ENCODE measurements at regions of chr20 and their contacts with region 1.

Region 1: GRCh38 chr20:36645998-36646397 is at the start of gene SLA2:
- DNase-seq: peak; percentile 86
- ATAC-seq: peak; percentile 80
- H3K4me3 Mint-ChIP-seq: peak within 1 kb of the TSS; percentile 99
- H3K27ac Mint-ChIP-seq: peak within 1 kb of the TSS; percentile 93
- H3K4me1 Mint-ChIP-seq: peaks cover 49% of the 10 kb centered on the region
- H3K27me3 Mint-ChIP-seq: no peaks in the 10 kb centered on the region
- total RNA-seq, gene SLA2: 131 to 137 TPM

Region 2: GRCh38 chr20:36573103-36573794 is 72.7 kb before region 1 on chr20 and contains the start of gene TGIF2:
- CTCF ChIA-PET with region 1: interaction called, 6 read pairs
- POLR2A ChIA-PET with region 1: interaction called, 16 read pairs
- DNase-seq: peak; percentile 93
- ATAC-seq: peak; percentile 76
- H3K4me3 Mint-ChIP-seq: peak within 1 kb of the TSS; percentile 87
- H3K27ac Mint-ChIP-seq: peak within 1 kb of the TSS; percentile 98
- H3K4me1 Mint-ChIP-seq: peaks cover 40% of the 10 kb centered on the region
- H3K27me3 Mint-ChIP-seq: no peaks in the 10 kb centered on the region
- total RNA-seq, gene TGIF2: 29.2 to 32.9 TPM

Region 3: DNA sequence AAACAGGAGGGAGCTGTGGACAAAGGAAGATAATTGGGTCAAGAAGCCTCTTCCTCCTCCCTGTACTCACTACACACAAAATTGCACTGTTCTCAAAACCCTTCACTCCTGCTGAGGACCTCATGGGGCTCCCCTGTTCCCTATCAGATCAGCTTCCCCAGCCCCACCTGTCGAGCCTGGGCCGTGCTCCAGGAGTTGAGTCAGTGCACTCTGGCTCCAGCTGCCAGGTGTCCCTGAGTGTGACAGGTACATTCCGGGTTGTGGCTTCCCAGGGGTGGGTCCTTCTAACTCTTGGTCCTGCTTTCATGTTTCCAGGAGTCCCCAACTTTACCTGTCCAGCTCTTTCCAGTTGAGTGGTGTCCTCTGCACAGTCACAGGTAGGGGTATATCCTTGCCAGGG is 32.0 kb before region 1 on chr20:
- CTCF ChIA-PET with region 1: interaction called, 43 read pairs
- POLR2A ChIA-PET with region 1: interaction called, 7 read pairs
- DNase-seq: no peak
- ATAC-seq: no peak
- H3K4me3 Mint-ChIP-seq: no peak overlapping the region
- H3K27ac Mint-ChIP-seq: peak overlapping the region; percentile 52
- H3K4me1 Mint-ChIP-seq: peaks cover 27% of the 10 kb centered on the region
- H3K27me3 Mint-ChIP-seq: no peaks in the 10 kb centered on the region

Region 4: GRCh38 chr20:36658300-36658699 is 12.3 kb after region 1 on chr20:
- CTCF ChIA-PET with region 1: interaction called, 13 read pairs
- POLR2A ChIA-PET with region 1: interaction called, 42 read pairs
- DNase-seq: peak; percentile 63
- ATAC-seq: peak; percentile 85
- H3K4me3 Mint-ChIP-seq: peak overlapping the region; percentile 66
- H3K27ac Mint-ChIP-seq: peak overlapping the region; percentile 97
- H3K4me1 Mint-ChIP-seq: peaks cover 44% of the 10 kb centered on the region
- H3K27me3 Mint-ChIP-seq: no peaks in the 10 kb centered on the region

Region 5: DNA sequence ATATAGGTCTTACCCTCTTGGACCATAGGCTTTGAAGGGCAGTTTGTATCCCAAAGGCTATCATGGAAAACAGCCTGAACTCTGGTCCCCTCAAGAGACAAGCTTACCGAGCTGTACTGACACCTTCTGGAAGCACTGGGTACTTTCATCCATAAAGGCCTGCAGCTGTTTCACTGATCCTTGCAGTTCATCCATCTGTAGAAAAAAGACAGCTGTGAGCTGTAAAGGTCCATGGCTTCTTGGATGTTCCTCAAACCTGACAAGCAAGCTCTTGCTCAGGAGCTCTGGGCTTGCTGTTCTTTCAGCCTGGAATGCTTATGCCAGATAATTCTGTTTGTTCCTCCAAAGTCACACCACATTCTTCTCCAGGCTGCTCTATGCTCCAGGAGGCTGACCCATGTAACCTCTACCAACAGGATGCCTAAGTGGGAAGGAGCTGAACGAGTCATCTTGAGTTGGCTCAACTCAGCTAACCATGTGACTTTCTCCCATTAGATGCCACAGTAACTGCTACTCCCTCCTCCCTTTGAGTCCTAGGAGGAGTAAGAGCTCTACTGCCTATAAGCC is 108.7 kb after region 1 on chr20:
- CTCF ChIA-PET with region 1: interaction called, 14 read pairs
- POLR2A ChIA-PET with region 1: interaction called, 3 read pairs
- DNase-seq: peak; percentile 67
- ATAC-seq: peak; percentile 75
- H3K4me3 Mint-ChIP-seq: no peak overlapping the region
- H3K27ac Mint-ChIP-seq: no peak overlapping the region
- H3K4me1 Mint-ChIP-seq: peaks cover 16% of the 10 kb centered on the region
- H3K27me3 Mint-ChIP-seq: no peaks in the 10 kb centered on the region